Activated T-helper 2 cell treated with anti-CD3 and anti-CD28 coated beads, Interferon-gamma antibody, Interleukin-2, Interleukin-4, amounts not matched to agents 10 μg/mL and 5 μg/mL and 100 μg/mL, durations not matched to agents 14 hours and 24 hours and 36 hours (primary cell): ENCODE measurements at regions of chr9 and their contacts with region 1.

Region 1: GRCh38 chr9:15873569-15874177 is 320.8 kb downstream of the CCDC171 start:
- DNase-seq: no peak
- H3K4me3 Mint-ChIP-seq: no peak overlapping the region
- H3K27ac Mint-ChIP-seq: no peak overlapping the region
- H3K4me1 Mint-ChIP-seq: no peaks in the 10 kb centered on the region
- H3K27me3 Mint-ChIP-seq: no peaks in the 10 kb centered on the region

Region 2: DNA sequence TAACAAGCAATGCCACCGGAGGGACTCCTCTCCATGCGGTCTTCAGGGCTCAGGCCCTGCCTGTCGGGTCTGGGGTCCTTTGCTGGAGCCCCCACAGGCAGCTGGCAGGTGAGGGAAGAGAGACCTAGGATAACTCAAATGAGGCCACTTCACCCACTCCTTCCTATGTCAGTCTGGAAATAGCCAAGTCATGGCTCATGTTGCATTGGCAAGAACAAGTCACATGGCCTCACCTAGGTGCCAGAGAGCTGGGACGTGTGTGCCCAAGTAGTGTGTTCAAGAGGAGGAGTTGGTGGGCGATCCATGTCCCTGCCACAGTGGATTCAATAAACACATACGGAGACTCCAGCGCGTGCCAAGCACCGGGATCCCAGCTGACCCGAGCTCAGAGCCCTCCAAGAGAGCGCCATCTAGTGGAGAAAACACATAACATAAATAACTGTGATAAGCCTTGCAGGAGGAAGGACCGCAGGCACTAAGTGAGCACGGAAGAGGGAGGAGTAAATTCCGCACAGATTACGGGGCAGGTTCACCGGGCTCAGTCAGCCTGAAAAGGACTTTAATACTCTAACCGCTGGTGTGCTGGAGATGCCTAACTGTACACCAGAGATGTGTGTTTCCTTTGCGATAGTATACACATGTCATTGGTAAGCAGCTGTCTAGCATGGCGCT is 260.0 kb after region 1 on chr9:
- intact Hi-C with region 1: loop called (anchors 2 kb)
- DNase-seq: peak; percentile 18
- H3K4me3 Mint-ChIP-seq: no peak overlapping the region
- H3K27ac Mint-ChIP-seq: no peak overlapping the region
- H3K4me1 Mint-ChIP-seq: peaks cover 3% of the 10 kb centered on the region
- H3K27me3 Mint-ChIP-seq: no peaks in the 10 kb centered on the region

Region 3: DNA sequence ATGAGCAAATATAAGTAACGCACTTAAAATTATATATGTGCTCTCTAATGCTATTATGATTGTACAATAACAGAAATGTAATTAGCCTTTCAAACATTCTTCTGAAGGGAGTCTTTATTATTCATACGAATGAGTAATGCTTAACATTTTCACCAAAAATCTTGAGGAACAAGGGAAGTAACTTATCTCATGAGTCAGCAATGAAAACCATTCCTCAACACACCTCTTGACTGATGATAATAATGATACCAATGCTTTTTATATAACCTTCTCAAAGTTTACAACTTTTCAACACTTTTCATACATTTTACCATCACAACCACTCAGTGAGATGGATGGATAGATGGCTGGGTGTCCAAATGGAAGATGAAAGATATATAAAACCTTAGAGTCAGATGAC is 627.5 kb after region 1 on chr9:
- intact Hi-C with region 1: no loop called
- DNase-seq: no peak
- H3K4me3 Mint-ChIP-seq: no peak overlapping the region
- H3K27ac Mint-ChIP-seq: no peak overlapping the region
- H3K4me1 Mint-ChIP-seq: no peaks in the 10 kb centered on the region
- H3K27me3 Mint-ChIP-seq: no peaks in the 10 kb centered on the region